Gastrocnemius medialis (tissue), 4 donors: ENCODE measurements at regions of chr19 and their contacts with region 1.

Region 1: DNA sequence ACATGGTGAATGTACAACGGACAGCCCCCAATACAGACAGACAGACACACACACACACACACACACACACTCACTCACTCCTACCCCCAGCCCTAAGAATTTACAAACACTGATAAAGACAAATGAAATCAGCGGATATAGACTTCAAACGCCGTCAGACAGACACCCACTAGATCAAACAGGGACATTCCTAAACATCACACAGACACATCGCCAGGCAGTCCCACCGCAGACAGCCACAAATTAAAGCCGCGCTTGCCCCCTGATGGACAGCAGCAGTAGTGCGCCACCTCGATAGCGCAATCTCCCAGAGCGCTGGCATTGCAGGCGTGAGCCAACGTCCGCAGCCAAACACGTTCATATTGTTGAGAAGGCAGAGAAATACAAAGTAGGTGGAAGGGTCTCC is 24.7 kb upstream of the ADGRE1 start:
- DNase-seq: peak; percentile 19 to 53
- ATAC-seq: peak in 1 of 2 donors; percentile 73
- H3K4me3 ChIP-seq: peak overlapping the region in 3 of 4 donors; percentile 20 to 39 (median 29)
- H3K27ac ChIP-seq: no peak overlapping the region
- H3K4me1 ChIP-seq: no peaks in the 10 kb centered on the region
- H3K27me3 ChIP-seq: no peaks in the 10 kb centered on the region
- CTCF ChIP-seq: peak; percentile 46 to 74 (median 68)
- POLR2A ChIP-seq: no peak

Region 2: DNA sequence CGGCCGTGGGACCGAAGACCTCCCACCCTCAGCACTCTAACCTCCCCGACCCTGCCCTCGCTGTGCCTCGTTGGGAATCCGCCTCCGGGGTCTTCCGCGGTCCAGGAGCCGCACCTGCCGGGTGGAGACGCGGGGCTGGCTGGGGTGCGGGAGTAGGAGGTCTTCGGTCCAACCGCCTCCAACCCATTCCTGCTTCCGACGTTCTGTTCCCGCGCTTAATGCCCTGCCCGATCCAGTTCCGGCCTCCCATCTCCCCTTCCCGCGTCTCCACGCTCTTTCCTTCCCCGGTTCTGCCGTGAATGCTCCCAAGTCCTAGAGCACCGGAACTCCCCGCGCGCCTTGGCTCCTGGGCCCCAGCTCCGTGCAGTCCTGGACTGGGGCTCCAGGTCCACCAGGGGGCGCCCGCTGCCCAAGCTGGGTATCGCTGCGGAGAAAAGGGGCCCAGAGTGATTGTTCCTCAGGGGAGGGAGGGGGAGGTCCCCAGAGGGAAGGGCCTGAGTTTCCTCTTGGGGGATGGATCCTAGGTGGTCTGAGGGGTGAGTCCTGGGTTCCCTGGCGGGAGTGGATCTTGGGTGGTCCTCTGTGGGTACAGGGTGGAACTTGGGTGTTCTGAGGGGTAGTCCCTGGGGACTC is 345.9 kb before region 1 on chr19:
- in situ Hi-C with region 1: loop called in 3 of 4 experiments (anchors 25 kb)
- intact Hi-C with region 1: loop called (anchors 2 kb)
- DNase-seq: peak; percentile 67 to 72
- ATAC-seq: peak; percentile 76 to 81
- H3K4me3 ChIP-seq: peak overlapping the region; percentile 63 to 82 (median 76)
- H3K27ac ChIP-seq: peak overlapping the region; percentile 64 to 82 (median 73)
- H3K4me1 ChIP-seq: peaks cover 0 to 2% of the 10 kb centered on the region in 2 donors
- H3K27me3 ChIP-seq: no peaks in the 10 kb centered on the region
- CTCF ChIP-seq: peak; percentile 74 to 97 (median 94)
- POLR2A ChIP-seq: no peak

Region 3: DNA sequence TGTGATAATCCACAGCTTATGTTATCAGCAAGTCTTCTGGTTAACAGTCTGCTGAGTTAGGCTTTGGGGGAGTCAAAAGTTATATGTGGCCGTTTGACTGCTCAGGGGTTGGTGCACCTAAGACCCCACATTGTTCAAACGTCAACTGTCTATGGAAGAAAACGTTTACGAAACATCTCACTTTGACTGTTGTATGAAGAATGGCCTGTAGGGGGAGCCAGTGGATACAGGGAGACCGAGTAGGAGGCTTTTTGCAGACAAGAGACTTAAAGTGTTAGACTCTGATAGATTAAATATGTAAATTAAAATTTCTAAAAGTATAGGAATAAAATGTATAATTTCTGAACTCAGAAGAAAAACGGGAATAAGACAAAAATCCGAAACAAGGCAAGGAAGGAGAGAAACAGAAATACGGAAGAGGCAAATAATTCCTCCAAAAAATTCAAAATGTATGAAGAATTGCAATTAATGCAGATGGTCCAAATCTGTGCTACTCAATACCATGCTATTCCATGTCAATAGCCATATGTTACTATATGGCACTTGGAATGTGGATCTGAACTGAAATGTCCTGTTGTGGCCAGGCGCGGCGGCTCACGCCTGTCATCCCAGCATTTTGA is 230.6 kb before region 1 on chr19:
- in situ Hi-C with region 1: loop called in 3 of 4 experiments (anchors 5 to 25 kb)
- intact Hi-C with region 1: loop called (anchors 5 kb)
- DNase-seq: peak; percentile 24 to 33
- ATAC-seq: no peak
- H3K4me3 ChIP-seq: no peak overlapping the region
- H3K27ac ChIP-seq: no peak overlapping the region
- H3K4me1 ChIP-seq: no peaks in the 10 kb centered on the region
- H3K27me3 ChIP-seq: peaks cover 0 to 2% (median 0%) of the 10 kb centered on the region in 3 donors
- CTCF ChIP-seq: peak; percentile 52 to 79 (median 65)
- POLR2A ChIP-seq: no peak

Region 4: GRCh38 chr19:6753178-6754031 is 109.3 kb before region 1 on chr19:
- in situ Hi-C with region 1: no loop called
- intact Hi-C with region 1: loop called (anchors 5 kb)
- DNase-seq: peak; percentile 74 to 87
- ATAC-seq: peak; percentile 84 to 90
- H3K4me3 ChIP-seq: peak overlapping the region; percentile 44 to 64 (median 57)
- H3K27ac ChIP-seq: peak overlapping the region; percentile 77 to 92 (median 89)
- H3K4me1 ChIP-seq: peaks cover 17 to 20% of the 10 kb centered on the region in 2 donors
- H3K27me3 ChIP-seq: no peaks in the 10 kb centered on the region
- CTCF ChIP-seq: peak; percentile 62 to 74 (median 69)
- POLR2A ChIP-seq: no peak

Region 5: GRCh38 chr19:7083076-7083956 is 220.6 kb after region 1 on chr19:
- in situ Hi-C with region 1: no loop called
- intact Hi-C with region 1: no loop called
- DNase-seq: no peak
- ATAC-seq: no peak
- H3K4me3 ChIP-seq: peak overlapping the region in 2 of 4 donors; percentile 3 to 10
- H3K27ac ChIP-seq: no peak overlapping the region
- H3K4me1 ChIP-seq: no peaks in the 10 kb centered on the region
- H3K27me3 ChIP-seq: no peaks in the 10 kb centered on the region
- CTCF ChIP-seq: no peak
- POLR2A ChIP-seq: no peak

Region 6: DNA sequence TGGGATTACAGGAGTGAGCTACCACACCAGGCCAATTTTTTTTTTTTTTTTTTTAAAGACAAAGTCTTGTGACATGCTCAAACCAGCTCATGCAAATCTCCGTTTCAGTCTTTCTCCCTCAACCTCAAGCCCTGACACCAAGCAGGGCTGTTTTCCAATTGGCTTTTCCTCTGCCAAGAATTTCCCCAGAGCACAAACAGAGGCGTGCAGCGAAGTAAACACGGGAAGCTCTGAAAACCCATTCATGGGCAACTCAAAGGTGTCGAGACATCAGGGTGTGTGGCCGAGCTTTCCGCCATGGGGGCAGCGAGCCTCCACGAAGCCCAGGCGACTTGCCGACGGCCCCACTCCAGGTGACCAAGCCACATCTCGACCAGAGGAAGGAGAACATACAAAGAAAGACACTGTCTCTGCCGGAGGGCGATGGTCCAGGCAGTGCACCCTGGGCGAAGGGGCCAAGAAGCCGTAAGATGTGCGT is 361.6 kb after region 1 on chr19:
- in situ Hi-C with region 1: no loop called
- intact Hi-C with region 1: no loop called
- DNase-seq: peak; percentile 29 to 44
- ATAC-seq: peak; percentile 56 to 61
- H3K4me3 ChIP-seq: peak overlapping the region in 2 of 4 donors; percentile 10 to 12
- H3K27ac ChIP-seq: peak overlapping the region; percentile 4 to 43 (median 26)
- H3K4me1 ChIP-seq: peaks cover 17 to 47% of the 10 kb centered on the region in 2 donors
- H3K27me3 ChIP-seq: no peaks in the 10 kb centered on the region
- CTCF ChIP-seq: no peak
- POLR2A ChIP-seq: no peak